ENCODE measurements at regions of chr3 and their contacts with region 1.

Region 1: GRCh38 chr3:100400780-100401673 is at the starts of genes LNP1 and TOMM70:
- DNase-seq: peak; percentile 82 to 97 (median 91)
- ATAC-seq: peak; percentile 87 to 88
- H3K4me3 Mint-ChIP-seq: peak within 1 kb of the TSS; percentile 90 to 99 (median 98)
- H3K27ac Mint-ChIP-seq: peak within 1 kb of the TSS; percentile 94 to 99 (median 97)
- H3K4me1 Mint-ChIP-seq: peaks cover 17 to 79% (median 64%) of the 10 kb centered on the region in 4 donors
- H3K27me3 Mint-ChIP-seq: no peaks in the 10 kb centered on the region
- polyA plus RNA-seq, gene LNP1: 0.40 to 2.0 (median 0.66) TPM
- polyA plus RNA-seq, gene TOMM70: 14.6 to 21.7 (median 16.5) TPM

Region 2: GRCh38 chr3:100260685-100261484 is 140.1 kb before region 1 on chr3 and contains the start of gene TBC1D23:
- POLR2A ChIA-PET with region 1: interaction called, 26 read pairs
- DNase-seq: peak; percentile 89 to 98 (median 96)
- ATAC-seq: peak; percentile 99
- H3K4me3 Mint-ChIP-seq: peak within 1 kb of the TSS; percentile 85 to 100 (median 98)
- H3K27ac Mint-ChIP-seq: peak within 1 kb of the TSS; percentile 97 to 100 (median 99)
- H3K4me1 Mint-ChIP-seq: peaks cover 40 to 64% (median 60%) of the 10 kb centered on the region in 4 donors
- H3K27me3 Mint-ChIP-seq: no peaks in the 10 kb centered on the region
- polyA plus RNA-seq, gene TBC1D23: 12.7 to 17.1 (median 16.1) TPM

Region 3: DNA sequence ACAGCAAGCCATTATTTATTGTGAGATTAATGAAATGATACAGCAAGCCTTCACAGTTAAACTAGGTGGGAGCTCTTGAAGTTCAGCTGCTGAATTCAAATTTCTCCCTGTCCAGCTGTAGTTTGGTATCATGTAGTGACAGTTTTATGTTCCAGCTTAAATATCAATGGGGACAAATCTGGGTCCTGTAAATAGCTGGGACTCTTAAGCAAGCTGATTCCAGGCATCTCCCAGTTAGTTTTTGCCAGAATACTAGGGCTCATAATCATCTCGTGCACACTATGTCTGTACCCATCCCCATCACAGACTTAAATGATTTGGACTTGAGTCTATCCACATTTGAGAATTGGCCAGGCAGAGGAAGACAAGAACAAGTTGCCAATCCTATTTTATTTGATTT is 94.3 kb before region 1 on chr3:
- POLR2A ChIA-PET with region 1: no interaction called
- DNase-seq: no peak
- ATAC-seq: no peak
- H3K4me3 Mint-ChIP-seq: no peak overlapping the region
- H3K27ac Mint-ChIP-seq: no peak overlapping the region
- H3K4me1 Mint-ChIP-seq: no peaks in the 10 kb centered on the region
- H3K27me3 Mint-ChIP-seq: no peaks in the 10 kb centered on the region

Region 4: DNA sequence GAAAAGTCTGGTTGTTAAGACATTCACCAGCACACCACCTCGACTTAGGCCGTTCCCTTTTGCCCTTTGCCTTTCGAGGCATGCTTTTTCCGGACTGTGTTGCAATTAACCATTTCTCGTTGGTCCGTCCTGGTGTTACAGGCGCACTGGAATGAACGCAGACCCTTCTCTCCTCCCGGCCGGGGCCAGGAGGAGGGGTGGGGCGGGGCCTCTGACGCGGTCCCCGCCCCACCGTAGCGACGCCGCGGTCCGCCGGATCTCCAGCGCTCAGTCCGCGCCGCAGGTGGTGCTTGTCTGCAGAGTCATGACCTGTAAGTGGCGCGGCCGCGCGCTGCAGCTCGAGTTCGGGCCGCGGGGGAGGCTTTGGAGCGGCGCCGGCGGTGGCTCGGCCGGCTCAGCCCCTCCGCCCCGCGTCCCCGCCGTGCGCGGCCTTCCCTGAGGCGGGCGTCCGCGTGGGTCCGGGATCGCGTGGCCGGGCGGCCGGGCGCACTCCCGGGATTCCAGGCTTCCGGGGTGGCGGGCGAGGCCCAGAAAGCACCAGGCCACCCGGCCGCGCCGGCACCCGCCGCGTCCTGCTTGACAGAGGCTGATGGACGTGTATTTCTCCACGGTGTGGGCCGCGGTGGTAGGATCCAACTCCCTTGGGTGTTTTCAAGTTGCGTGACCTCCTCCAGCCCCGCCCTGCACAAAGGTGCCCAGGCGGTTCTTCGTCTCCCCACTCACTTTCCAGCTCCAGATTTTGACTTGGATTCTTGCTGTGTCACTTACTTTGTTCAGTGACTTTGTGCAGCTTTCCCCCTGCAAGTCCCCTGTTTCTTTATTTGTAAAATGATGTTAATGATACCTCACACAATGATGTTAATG is 66.3 kb before region 1 on chr3 and contains the start of gene NIT2:
- POLR2A ChIA-PET with region 1: interaction called, 23 read pairs
- DNase-seq: peak; percentile 60 to 86 (median 69)
- ATAC-seq: peak; percentile 93 to 95
- H3K4me3 Mint-ChIP-seq: peak within 1 kb of the TSS; percentile 84 to 99 (median 94)
- H3K27ac Mint-ChIP-seq: peak within 1 kb of the TSS; percentile 39 to 96 (median 92)
- H3K4me1 Mint-ChIP-seq: peaks cover 18 to 33% (median 30%) of the 10 kb centered on the region in 4 donors
- H3K27me3 Mint-ChIP-seq: no peaks in the 10 kb centered on the region
- polyA plus RNA-seq, gene NIT2: 35.8 to 43.8 (median 40.1) TPM

Region 5: DNA sequence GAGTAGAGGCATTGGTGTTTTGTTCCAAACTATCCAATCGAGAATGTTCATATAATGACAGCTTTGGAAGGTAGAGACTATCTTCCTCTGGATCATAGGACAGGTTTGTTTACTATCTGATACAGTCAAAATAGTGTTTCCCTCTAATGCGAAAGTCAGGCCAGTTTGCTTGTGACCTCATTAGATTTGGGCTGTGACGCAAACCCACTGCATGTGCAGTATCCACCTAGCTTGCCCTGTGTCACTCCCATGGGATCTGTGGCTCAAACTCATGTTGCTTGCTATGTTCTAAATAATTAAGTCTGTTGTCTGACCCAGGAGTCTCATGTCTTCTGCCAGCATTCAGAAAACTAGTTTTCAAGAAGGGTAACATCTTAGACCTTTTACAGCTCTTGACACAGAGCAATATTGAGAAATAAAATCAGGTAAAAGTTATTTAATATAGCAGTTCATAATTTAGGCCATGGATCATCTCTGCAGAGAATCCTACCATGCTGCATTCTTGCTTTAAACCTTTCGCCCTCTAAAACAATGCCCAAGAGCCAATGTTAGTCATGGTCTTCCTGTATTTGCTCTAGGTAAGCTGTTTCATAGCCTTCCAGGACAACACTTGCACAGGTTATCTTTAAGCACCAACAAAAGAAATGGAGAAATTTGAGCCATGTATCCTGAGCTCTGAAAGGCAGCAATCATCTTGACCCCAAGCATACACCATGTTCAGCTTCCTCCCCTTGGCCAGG is 40.1 kb before region 1 on chr3:
- POLR2A ChIA-PET with region 1: no interaction called
- DNase-seq: no peak
- ATAC-seq: no peak
- H3K4me3 Mint-ChIP-seq: no peak overlapping the region
- H3K27ac Mint-ChIP-seq: peak overlapping the region in 6 of 10 donors; percentile 1 to 28 (median 10)
- H3K4me1 Mint-ChIP-seq: no peaks in the 10 kb centered on the region
- H3K27me3 Mint-ChIP-seq: no peaks in the 10 kb centered on the region

Region 6: GRCh38 chr3:101036213-101036618 is 635.2 kb after region 1 on chr3:
- POLR2A ChIA-PET with region 1: no interaction called
- DNase-seq: no peak
- ATAC-seq: no peak
- H3K4me3 Mint-ChIP-seq: no peak overlapping the region
- H3K27ac Mint-ChIP-seq: no peak overlapping the region
- H3K4me1 Mint-ChIP-seq: no peaks in the 10 kb centered on the region
- H3K27me3 Mint-ChIP-seq: peaks cover 1 to 11% (median 9%) of the 10 kb centered on the region in 5 donors